ENCODE measurements at regions of chr3 and their contacts with region 1.

Region 1: DNA sequence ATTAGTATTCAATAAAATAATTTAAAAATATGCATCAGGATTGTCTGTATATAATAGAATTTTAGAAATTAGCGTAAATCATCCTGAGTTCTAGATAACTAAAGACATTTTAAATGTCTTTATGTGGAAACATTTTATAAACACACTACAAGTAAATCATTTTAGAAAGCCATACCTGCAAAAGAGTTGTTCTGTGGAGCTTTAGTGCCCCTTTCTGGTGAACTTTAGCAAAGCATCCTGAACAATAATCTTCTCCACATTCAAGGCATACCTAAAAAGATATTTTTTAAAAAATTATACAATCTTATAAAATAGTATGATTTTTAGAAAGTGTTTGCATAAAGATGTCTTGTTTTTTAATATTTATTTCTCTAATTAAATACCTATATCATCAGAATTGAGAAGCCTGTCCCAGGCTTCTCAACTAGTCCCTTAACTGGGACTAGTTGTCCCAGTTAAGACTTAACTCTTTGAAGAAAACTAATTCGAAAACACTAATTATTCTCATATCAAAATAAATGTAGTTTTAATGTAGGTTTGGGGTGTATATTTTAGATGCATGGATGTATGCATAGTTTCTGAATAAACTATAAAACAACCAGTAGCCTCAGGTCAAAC is 29.7 kb downstream of the ZBBX start:
- DNase-seq: no peak
- ATAC-seq: no peak
- H3K4me3 ChIP-seq: no peak overlapping the region
- H3K27ac ChIP-seq: no peak overlapping the region
- H3K4me1 ChIP-seq: no peaks in the 10 kb centered on the region
- H3K27me3 ChIP-seq: no peaks in the 10 kb centered on the region
- CTCF ChIP-seq: peak; percentile 43 to 55 (median 43); a peak in 5 of 6 replicates
- EP300 ChIP-seq: no peak
- POLR2A ChIP-seq: no peak
- RAD21 ChIP-seq: peak; percentile 66

Region 2: GRCh38 chr3:166013073-166013679 is 1337.2 kb before region 1 on chr3:
- CTCF ChIA-PET with region 1: no interaction called
- POLR2A ChIA-PET with region 1: no interaction called
- RAD21 ChIA-PET with region 1: no interaction called
- SMC1A ChIA-PET with region 1: no interaction called
- in situ Hi-C with region 1: no loop called
- intact Hi-C with region 1: loop called (anchors 5 kb)
- DNase-seq: no peak
- ATAC-seq: peak; percentile 66
- H3K4me3 ChIP-seq: no peak overlapping the region
- H3K27ac ChIP-seq: no peak overlapping the region
- H3K4me1 ChIP-seq: no peaks in the 10 kb centered on the region
- H3K27me3 ChIP-seq: no peaks in the 10 kb centered on the region
- CTCF ChIP-seq: peak; percentile 19 to 44 (median 29); a peak in 4 of 6 replicates
- EP300 ChIP-seq: no peak
- POLR2A ChIP-seq: no peak
- RAD21 ChIP-seq: peak; percentile 29; the same call in 1 of the 2 replicates

Region 3: DNA sequence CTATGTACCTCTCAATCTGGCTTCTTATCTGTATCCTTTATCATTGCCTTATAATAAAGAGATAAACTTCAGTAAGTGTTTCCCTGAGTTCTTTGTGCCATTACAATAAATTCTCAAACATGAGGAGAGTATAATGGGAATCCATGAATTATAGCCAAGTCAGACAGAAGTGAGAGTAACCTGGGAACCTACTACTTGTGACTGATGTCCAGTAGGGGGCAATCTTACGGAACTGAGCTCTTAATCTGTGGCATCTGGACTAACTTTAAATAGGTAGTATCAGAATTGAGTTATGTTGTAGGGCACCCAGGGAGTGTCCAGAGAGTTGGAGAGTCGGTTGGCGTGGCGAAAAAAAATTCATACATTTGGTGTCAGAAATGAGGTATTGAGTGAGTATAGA is 512.8 kb before region 1 on chr3:
- CTCF ChIA-PET with region 1: no interaction called
- POLR2A ChIA-PET with region 1: no interaction called
- RAD21 ChIA-PET with region 1: no interaction called
- SMC1A ChIA-PET with region 1: interaction called, 3 read pairs
- in situ Hi-C with region 1: no loop called
- intact Hi-C with region 1: loop called (anchors 2 kb)
- DNase-seq: no peak
- ATAC-seq: peak; percentile 93
- H3K4me3 ChIP-seq: no peak overlapping the region
- H3K27ac ChIP-seq: no peak overlapping the region
- H3K4me1 ChIP-seq: no peaks in the 10 kb centered on the region
- H3K27me3 ChIP-seq: no peaks in the 10 kb centered on the region
- CTCF ChIP-seq: peak in 2 of 3 experiments; percentile 36 to 52; a peak in 3 of 6 replicates
- EP300 ChIP-seq: no peak
- POLR2A ChIP-seq: no peak
- RAD21 ChIP-seq: peak; percentile 13; the same call in 1 of the 2 replicates

Region 4: DNA sequence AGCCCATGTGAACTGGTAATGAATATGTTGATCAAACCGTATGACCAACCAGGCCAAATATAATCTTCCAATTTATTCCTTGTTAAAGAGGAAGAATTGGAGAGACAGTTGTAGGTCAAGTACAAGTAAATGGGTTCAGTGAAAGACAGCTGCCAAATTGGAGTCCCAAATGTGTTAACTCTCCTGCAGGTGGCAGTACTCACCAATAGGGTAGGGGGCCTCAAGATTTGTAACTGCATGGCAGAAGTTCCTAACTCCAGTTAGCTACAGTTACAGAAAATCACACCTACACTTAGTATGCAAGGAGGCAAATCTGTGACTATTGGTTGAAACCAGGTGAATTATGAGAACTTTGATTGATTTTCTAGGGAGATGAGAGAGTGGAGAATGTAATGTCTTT is 248.3 kb before region 1 on chr3:
- CTCF ChIA-PET with region 1: no interaction called
- POLR2A ChIA-PET with region 1: no interaction called
- RAD21 ChIA-PET with region 1: interaction called, 3 read pairs
- SMC1A ChIA-PET with region 1: no interaction called
- in situ Hi-C with region 1: no loop called
- intact Hi-C with region 1: loop called (anchors 1 kb)
- DNase-seq: no peak
- ATAC-seq: peak; percentile 66
- H3K4me3 ChIP-seq: no peak overlapping the region
- H3K27ac ChIP-seq: no peak overlapping the region
- H3K4me1 ChIP-seq: no peaks in the 10 kb centered on the region
- H3K27me3 ChIP-seq: no peaks in the 10 kb centered on the region
- CTCF ChIP-seq: peak; percentile 17 to 28 (median 22); a peak in 2 of 6 replicates
- EP300 ChIP-seq: no peak
- POLR2A ChIP-seq: no peak
- RAD21 ChIP-seq: 0 out of 2 replicates have a peak, but pooled peaks have one; percentile 28